ENCODE measurements at regions of chr12 and their contacts with region 1.

Region 1: GRCh38 chr12:49358483-49359141 is 8.7 kb upstream of the SPATS2 start:
- DNase-seq: no peak
- H3K4me3 ChIP-seq: no peak overlapping the region
- CTCF ChIP-seq: peak; percentile 59

Region 2: DNA sequence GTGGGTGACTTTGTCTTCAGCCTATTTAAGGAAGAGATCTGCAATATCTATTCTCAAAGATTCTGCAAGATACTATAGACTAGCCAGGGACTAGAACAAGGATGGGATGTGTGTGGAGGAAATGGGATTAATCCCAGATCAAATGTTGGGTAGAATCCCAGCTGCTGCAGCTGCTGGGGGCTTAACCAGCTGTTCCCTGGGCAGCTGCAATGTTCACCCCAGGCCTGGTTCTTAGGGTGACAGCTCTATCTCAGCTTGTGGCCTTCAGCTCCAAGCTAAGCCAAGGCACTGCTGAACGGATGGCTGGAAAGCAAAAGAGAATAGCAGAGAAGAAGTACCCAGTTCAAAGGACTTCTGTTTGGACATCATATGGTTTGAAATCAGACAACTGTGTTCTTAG is 278.8 kb before region 1 on chr12:
- CTCF ChIA-PET with region 1: no interaction called
- POLR2A ChIA-PET with region 1: no interaction called
- DNase-seq: no peak
- H3K4me3 ChIP-seq: no peak overlapping the region
- CTCF ChIP-seq: no peak

Region 3: GRCh38 chr12:49130151-49131050 is 228.2 kb before region 1 on chr12:
- CTCF ChIA-PET with region 1: no interaction called
- POLR2A ChIA-PET with region 1: no interaction called
- DNase-seq: peak; percentile 63
- H3K4me3 ChIP-seq: peak overlapping the region; percentile 96
- CTCF ChIP-seq: peak; percentile 98

Region 4: GRCh38 chr12:49347384-49348237 is 11.0 kb before region 1 on chr12:
- CTCF ChIA-PET with region 1: interaction called, 139 read pairs
- POLR2A ChIA-PET with region 1: no interaction called
- DNase-seq: no peak
- H3K4me3 ChIP-seq: peak overlapping the region; percentile 47
- CTCF ChIP-seq: peak; percentile 96

Region 5: DNA sequence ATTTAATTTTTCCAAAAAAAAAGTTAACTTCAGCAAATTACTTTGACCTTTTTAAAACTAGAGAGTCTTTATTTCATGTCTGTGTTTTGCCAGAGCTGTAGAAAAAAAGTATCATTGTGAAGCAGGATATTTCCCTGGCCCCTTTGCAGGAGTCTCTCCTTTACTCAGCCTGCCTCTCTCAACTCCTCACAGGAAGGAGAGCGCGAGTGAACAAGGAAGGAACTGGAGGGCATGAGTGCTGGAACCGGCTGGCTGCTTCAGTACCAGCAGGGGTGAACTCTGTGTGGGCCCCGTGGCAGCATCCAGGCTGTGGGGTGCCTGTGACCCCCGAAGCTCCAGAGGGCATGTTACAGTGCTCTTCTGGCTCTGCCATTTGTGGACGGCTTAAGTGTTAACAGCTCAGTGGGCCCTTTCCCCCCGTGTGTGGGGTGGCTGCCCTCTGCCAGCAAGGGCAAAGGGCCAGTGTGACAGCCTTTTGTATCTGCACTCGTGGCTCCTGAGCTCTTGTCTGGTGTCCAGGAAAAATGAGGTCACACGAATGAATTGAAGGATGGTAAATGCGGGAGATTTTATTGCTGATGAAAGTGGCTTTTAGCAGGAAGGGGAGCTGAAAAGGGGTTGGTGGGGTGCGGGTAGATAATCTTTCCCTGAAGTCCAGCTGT is 103.6 kb after region 1 on chr12:
- CTCF ChIA-PET with region 1: interaction called, 14 read pairs
- POLR2A ChIA-PET with region 1: interaction called, 3 read pairs
- DNase-seq: no peak
- H3K4me3 ChIP-seq: no peak overlapping the region
- CTCF ChIP-seq: no peak

Region 6: GRCh38 chr12:49496417-49497360 is 138.1 kb after region 1 on chr12:
- CTCF ChIA-PET with region 1: interaction called, 22 read pairs
- POLR2A ChIA-PET with region 1: no interaction called
- DNase-seq: no peak
- H3K4me3 ChIP-seq: no peak overlapping the region
- CTCF ChIP-seq: no peak

Region 7: GRCh38 chr12:49538510-49539403 is 180.1 kb after region 1 on chr12 and contains the start of gene KCNH3:
- CTCF ChIA-PET with region 1: interaction called, 35 read pairs
- POLR2A ChIA-PET with region 1: no interaction called
- DNase-seq: no peak
- H3K4me3 ChIP-seq: peak within 1 kb of the TSS; percentile 38
- CTCF ChIP-seq: no peak

Region 8: DNA sequence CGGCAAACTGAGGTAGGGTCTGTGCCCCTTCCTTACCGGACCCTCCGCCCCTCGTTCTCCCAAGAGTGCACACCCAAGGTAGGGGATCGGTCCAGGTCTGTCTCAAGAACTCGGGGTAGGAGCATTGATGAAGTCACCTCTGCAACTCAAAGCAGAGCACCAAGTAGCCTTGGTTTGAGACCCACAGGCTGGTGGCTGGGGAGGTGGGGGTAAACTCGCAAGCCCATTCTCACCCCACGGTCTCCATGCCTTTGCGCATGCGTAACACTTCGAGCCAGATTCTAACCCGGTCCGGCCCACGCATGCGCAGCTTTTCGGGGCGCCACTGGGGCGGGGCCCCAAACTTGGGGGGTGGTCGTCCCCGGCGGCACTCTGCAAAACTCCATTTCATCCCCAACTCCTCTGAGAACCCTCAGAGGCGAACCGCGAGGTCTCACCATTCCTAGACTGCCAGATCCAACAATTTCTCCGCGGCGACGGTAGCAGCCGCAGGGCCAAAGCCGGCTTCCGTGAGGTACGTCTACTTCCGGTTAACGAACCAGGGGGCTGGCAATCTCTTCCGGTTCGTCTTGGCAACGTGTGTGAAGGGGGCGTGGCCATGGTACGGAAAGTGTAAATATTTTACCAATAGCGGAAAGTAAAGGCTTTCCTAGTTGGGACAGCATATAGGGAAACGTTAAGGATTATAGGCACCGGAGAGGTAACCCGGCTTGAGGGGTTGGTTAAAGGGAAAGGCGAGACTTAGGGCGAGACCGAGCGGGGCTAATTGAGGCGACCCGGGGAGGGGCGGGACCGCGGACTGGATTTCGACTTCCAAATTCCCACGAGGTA is 209.2 kb after region 1 on chr12 and contains the start of gene MCRS1:
- CTCF ChIA-PET with region 1: interaction called, 18 read pairs
- POLR2A ChIA-PET with region 1: no interaction called
- DNase-seq: peak; percentile 50
- H3K4me3 ChIP-seq: peak within 1 kb of the TSS; percentile 100
- CTCF ChIP-seq: no peak